PC-3 (cell line): ENCODE measurements at regions of chr9 and their contacts with region 1.

Region 1: GRCh38 chr9:72271613-72272478 is 93.2 kb downstream of the ZFAND5 start:
- DNase-seq: peak; percentile 72
- ATAC-seq: peak; percentile 53; the same call in 1 of the 2 replicates
- H3K4me3 ChIP-seq: no peak overlapping the region
- H3K27ac ChIP-seq: no peak overlapping the region
- H3K4me1 ChIP-seq: no peaks in the 10 kb centered on the region
- H3K27me3 ChIP-seq: no peaks in the 10 kb centered on the region; the same call in 1 of the 2 replicates
- CTCF ChIP-seq: peak; percentile 81

Region 2: DNA sequence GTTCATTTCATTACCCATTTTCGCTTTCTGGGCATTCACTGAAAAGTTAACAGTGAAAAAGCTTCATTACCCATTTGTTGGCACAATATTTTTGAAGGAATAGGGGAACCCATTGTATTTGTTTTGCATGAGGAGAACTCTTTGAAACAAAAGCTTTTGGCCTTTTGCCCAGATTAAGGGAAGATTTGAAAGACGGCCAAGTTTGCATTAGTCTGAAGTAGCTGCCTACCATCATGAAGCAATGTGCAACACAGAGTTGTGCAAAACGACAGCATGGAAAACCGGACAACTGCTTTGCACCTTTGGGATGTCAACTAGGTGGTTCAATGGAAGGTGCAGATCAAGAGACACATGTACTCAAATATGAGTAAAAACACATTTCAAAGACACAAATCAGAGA is 1235.3 kb before region 1 on chr9:
- CTCF ChIA-PET with region 1: no interaction called
- POLR2A ChIA-PET with region 1: no interaction called
- intact Hi-C with region 1: no loop called
- DNase-seq: no peak
- ATAC-seq: no peak
- H3K4me3 ChIP-seq: no peak overlapping the region
- H3K27ac ChIP-seq: no peak overlapping the region
- H3K4me1 ChIP-seq: no peaks in the 10 kb centered on the region
- H3K27me3 ChIP-seq: no peaks in the 10 kb centered on the region
- CTCF ChIP-seq: no peak

Region 3: GRCh38 chr9:71353720-71354119 is 918.1 kb before region 1 on chr9:
- CTCF ChIA-PET with region 1: no interaction called
- POLR2A ChIA-PET with region 1: no interaction called
- intact Hi-C with region 1: no loop called
- DNase-seq: no peak
- ATAC-seq: no peak
- H3K4me3 ChIP-seq: no peak overlapping the region
- H3K27ac ChIP-seq: no peak overlapping the region
- H3K4me1 ChIP-seq: no peaks in the 10 kb centered on the region
- H3K27me3 ChIP-seq: 0 out of 2 replicates have a peak, but pooled peaks cover 3% of the 10 kb centered on the region
- CTCF ChIP-seq: no peak

Region 4: DNA sequence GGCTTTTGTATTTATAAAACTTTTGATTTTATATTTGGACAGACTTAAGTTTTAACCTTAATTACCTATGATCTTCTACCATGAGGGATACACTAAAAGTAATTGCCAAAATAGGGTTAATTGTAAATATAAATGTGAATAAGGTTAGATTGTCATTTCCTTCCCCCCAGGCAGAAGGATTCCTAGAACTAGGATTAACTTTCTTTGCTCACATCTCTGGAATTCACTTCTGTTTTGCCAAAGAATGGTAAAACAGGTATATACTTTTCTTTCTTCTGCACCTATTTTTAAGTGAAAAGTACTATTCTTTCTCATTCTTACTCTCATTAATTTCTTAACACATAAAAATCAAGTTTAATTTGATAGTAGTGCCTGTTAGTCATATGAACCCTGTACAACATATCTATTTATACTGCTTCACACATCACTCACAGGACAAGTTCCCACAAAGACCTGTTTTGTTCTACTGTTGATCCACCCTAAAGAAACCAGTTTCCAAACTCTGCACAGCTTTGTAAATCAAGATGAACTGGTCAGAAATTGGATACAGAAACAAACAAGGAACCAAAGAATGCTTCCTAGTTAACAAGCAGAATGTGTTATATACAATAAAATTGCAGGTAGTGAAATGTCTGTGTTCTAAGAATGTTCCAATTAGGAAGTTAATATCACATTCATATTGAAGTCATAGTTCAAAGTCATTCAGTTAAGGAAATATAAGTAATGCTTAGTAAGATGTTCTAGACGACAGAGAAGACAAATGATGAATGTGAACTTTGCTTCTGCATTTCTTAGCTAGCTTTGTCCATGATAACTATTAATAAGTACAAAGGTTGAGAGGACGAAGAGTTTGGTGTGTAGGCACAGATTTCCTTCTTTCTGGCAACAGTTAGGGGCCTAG is 327.1 kb before region 1 on chr9:
- CTCF ChIA-PET with region 1: no interaction called
- POLR2A ChIA-PET with region 1: no interaction called
- intact Hi-C with region 1: no loop called
- DNase-seq: peak; percentile 70
- ATAC-seq: peak; percentile 83
- H3K4me3 ChIP-seq: peak overlapping the region; percentile 41; the same call in 1 of the 2 replicates
- H3K27ac ChIP-seq: peak overlapping the region; percentile 91
- H3K4me1 ChIP-seq: peaks cover 34% of the 10 kb centered on the region
- H3K27me3 ChIP-seq: no peaks in the 10 kb centered on the region
- CTCF ChIP-seq: no peak

Region 5: GRCh38 chr9:72038890-72039410 is 232.9 kb before region 1 on chr9:
- CTCF ChIA-PET with region 1: interaction called, 8 read pairs
- POLR2A ChIA-PET with region 1: no interaction called
- intact Hi-C with region 1: loop called (anchors 1 kb)
- DNase-seq: peak; percentile 80
- ATAC-seq: peak; percentile 83
- H3K4me3 ChIP-seq: no peak overlapping the region
- H3K27ac ChIP-seq: no peak overlapping the region
- H3K4me1 ChIP-seq: peaks cover 8% of the 10 kb centered on the region; the same call in 1 of the 2 replicates
- H3K27me3 ChIP-seq: no peaks in the 10 kb centered on the region
- CTCF ChIP-seq: peak; percentile 81